Thyroid gland (tissue), 4 donors: ENCODE measurements at regions of chr9 and their contacts with region 1.

Region 1: DNA sequence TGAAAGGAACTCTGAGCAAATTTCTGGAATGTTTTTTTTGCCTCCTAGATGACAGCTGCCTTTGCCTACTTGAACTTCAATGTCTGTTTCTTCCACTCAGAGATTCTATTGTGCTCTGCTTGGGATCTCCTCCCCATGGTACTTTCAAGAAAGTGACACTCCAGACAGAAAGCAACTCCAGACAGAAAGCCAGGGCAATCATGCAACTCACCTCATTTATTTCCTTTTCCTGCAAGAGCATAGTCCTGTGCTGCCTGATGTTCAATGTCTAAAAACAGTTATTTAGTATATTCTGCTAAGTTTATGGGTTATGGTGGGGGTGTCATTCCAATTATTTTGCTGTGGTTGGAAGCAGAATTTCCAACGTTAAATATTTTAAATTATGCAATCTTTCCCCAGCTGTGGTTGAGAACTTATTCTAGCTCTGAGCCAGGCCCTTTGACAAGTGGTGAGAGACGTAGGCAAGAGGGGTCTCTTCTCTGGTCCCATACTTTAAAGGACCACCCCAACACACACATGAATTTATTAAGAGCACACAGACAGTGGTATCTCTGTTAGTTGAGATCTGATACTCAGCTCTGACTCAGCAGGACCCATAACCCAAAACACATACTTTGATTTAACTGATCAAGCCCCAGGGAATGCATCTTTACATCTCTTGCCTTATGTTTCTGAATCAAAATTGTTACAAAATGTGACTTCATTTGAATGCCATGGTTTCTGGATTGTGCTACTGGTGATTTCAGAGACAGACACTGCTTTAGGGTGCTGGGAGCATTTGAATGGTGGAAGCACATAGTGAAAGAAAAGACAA is 39.5 kb upstream of the MAMDC2 start:
- DNase-seq: no peak
- H3K4me3 ChIP-seq: no peak overlapping the region
- H3K27ac ChIP-seq: no peak overlapping the region
- H3K4me1 ChIP-seq: no peaks in the 10 kb centered on the region
- H3K27me3 ChIP-seq: no peaks in the 10 kb centered on the region
- CTCF ChIP-seq: no peak
- POLR2A ChIP-seq: no peak

Region 2: GRCh38 chr9:69898714-69899209 is 105.3 kb before region 1 on chr9:
- intact Hi-C with region 1: no loop called
- DNase-seq: no peak
- H3K4me3 ChIP-seq: no peak overlapping the region
- H3K27ac ChIP-seq: no peak overlapping the region
- H3K4me1 ChIP-seq: no peaks in the 10 kb centered on the region
- H3K27me3 ChIP-seq: no peaks in the 10 kb centered on the region
- CTCF ChIP-seq: no peak
- POLR2A ChIP-seq: no peak

Region 3: GRCh38 chr9:70060883-70061507 is 56.9 kb after region 1 on chr9:
- intact Hi-C with region 1: loop called (anchors 10 kb)
- DNase-seq: no peak
- H3K4me3 ChIP-seq: no peak overlapping the region
- H3K27ac ChIP-seq: no peak overlapping the region
- H3K4me1 ChIP-seq: no peaks in the 10 kb centered on the region
- H3K27me3 ChIP-seq: no peaks in the 10 kb centered on the region
- CTCF ChIP-seq: no peak
- POLR2A ChIP-seq: no peak

Region 4: DNA sequence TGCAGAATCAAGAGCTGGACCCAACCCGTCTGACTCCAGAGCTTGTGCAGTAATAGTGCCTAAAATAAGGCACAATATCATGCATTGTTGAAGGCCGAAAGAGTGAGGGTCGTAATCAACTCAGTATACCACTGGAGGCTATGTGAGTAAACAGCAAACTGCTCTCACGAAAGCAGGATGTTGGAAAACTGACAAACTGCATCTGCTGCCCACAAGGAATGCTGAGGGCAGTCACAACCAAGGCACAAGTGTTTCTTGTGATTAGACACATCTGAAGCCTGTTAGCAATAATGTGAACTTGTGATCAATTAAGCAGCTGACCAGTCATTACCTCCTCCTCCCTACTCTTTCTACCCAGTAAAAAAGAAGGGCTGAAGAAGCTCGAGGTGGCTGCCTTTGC is 1068.5 kb after region 1 on chr9:
- intact Hi-C with region 1: no loop called
- DNase-seq: no peak
- H3K4me3 ChIP-seq: no peak overlapping the region
- H3K27ac ChIP-seq: no peak overlapping the region
- H3K4me1 ChIP-seq: no peaks in the 10 kb centered on the region
- H3K27me3 ChIP-seq: no peaks in the 10 kb centered on the region
- CTCF ChIP-seq: no peak
- POLR2A ChIP-seq: no peak